ENCODE measurements at regions of chr6 and their contacts with region 1.

Region 1: GRCh38 chr6:152142105-152142504 is 334.6 kb downstream of the ESR1 start:
- DNase-seq: no peak
- H3K4me3 Mint-ChIP-seq: no peak overlapping the region
- H3K27ac Mint-ChIP-seq: no peak overlapping the region
- H3K4me1 Mint-ChIP-seq: no peaks in the 10 kb centered on the region
- H3K27me3 Mint-ChIP-seq: no peaks in the 10 kb centered on the region

Region 2: GRCh38 chr6:152124429-152125074 is 17.6 kb before region 1 on chr6:
- CTCF ChIA-PET with region 1: interaction called, 11 read pairs
- intact Hi-C with region 1: no loop called
- DNase-seq: no peak
- H3K4me3 Mint-ChIP-seq: no peak overlapping the region
- H3K27ac Mint-ChIP-seq: peak overlapping the region; percentile 39
- H3K4me1 Mint-ChIP-seq: no peaks in the 10 kb centered on the region
- H3K27me3 Mint-ChIP-seq: no peaks in the 10 kb centered on the region

Region 3: DNA sequence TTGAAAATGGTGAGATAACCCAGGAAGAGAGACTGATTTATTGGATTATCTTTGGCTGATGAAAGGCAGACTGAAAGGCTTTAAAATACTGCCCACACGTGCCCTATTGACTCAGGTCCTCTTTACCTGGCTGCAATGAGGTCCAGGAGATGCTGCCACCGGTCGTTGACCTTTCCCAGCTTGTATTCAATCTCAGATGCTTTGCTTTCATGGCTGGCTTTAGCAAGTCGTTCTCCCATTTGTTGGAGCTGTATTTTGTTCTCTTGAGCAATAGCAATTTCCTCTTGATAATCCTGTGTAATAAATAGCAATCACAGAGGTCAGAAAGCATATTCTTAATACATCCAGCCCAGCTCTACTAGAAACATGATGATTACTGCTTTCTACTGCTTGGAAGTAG is 34.2 kb after region 1 on chr6:
- CTCF ChIA-PET with region 1: no interaction called
- intact Hi-C with region 1: no loop called
- DNase-seq: no peak
- H3K4me3 Mint-ChIP-seq: no peak overlapping the region
- H3K27ac Mint-ChIP-seq: no peak overlapping the region
- H3K4me1 Mint-ChIP-seq: peaks cover 43% of the 10 kb centered on the region
- H3K27me3 Mint-ChIP-seq: no peaks in the 10 kb centered on the region